Heart right ventricle (tissue), 16 donors: ENCODE measurements at regions of chr9 and their contacts with region 1.

Region 1: GRCh38 chr9:121538246-121538645 is 38.6 kb upstream of the GGTA1 start:
- DNase-seq: no peak
- ATAC-seq: peak in 7 of 8 donors; percentile 11 to 63 (median 47)
- H3K4me3 ChIP-seq: no peak overlapping the region
- H3K27ac ChIP-seq: peak overlapping the region in 1 of 10 donors; percentile 64
- H3K4me1 ChIP-seq: peaks cover 0 to 15% (median 9%) of the 10 kb centered on the region in 9 donors
- H3K27me3 ChIP-seq: no peaks in the 10 kb centered on the region
- CTCF ChIP-seq: peak in 7 of 9 donors; percentile 21 to 54 (median 37)

Region 2: GRCh38 chr9:121463026-121463807 is 75.0 kb before region 1 on chr9:
- intact Hi-C with region 1: loop called in 7 of 10 experiments (anchors 1 to 10 kb)
- DNase-seq: peak; percentile 72 to 73
- ATAC-seq: peak in 7 of 8 donors; percentile 54 to 85 (median 72)
- H3K4me3 ChIP-seq: no peak overlapping the region
- H3K27ac ChIP-seq: peak overlapping the region in 1 of 10 donors; percentile 41
- H3K4me1 ChIP-seq: peaks cover 0 to 31% (median 10%) of the 10 kb centered on the region in 9 donors
- H3K27me3 ChIP-seq: no peaks in the 10 kb centered on the region
- CTCF ChIP-seq: peak; percentile 74 to 89 (median 83)

Region 3: GRCh38 chr9:121498150-121498486 is 40.1 kb before region 1 on chr9:
- intact Hi-C with region 1: loop called in 3 of 10 experiments (anchors 5 kb)
- DNase-seq: peak in 1 of 2 donors; percentile 78
- ATAC-seq: peak; percentile 23 to 75 (median 64)
- H3K4me3 ChIP-seq: peak overlapping the region in 9 of 10 donors; percentile 51 to 82 (median 70)
- H3K27ac ChIP-seq: peak overlapping the region in 8 of 10 donors; percentile 86 to 95 (median 94)
- H3K4me1 ChIP-seq: peaks cover 5 to 67% (median 28%) of the 10 kb centered on the region in 9 donors
- H3K27me3 ChIP-seq: peaks cover 0 to 6% (median 0%) of the 10 kb centered on the region in 7 donors
- CTCF ChIP-seq: peak; percentile 36 to 82 (median 73)

Region 4: GRCh38 chr9:121581786-121582600 is 43.7 kb after region 1 on chr9:
- intact Hi-C with region 1: no loop called
- DNase-seq: peak in 1 of 2 donors; percentile 47
- ATAC-seq: peak in 3 of 8 donors; percentile 32 to 61 (median 34)
- H3K4me3 ChIP-seq: no peak overlapping the region
- H3K27ac ChIP-seq: peak overlapping the region in 1 of 10 donors; percentile 15
- H3K4me1 ChIP-seq: peaks cover 4 to 29% (median 9%) of the 10 kb centered on the region in 9 donors
- H3K27me3 ChIP-seq: no peaks in the 10 kb centered on the region
- CTCF ChIP-seq: no peak

Region 5: GRCh38 chr9:121640076-121640475 is 101.8 kb after region 1 on chr9:
- intact Hi-C with region 1: no loop called
- DNase-seq: peak; percentile 70 to 73
- ATAC-seq: peak; percentile 52 to 84 (median 74)
- H3K4me3 ChIP-seq: no peak overlapping the region
- H3K27ac ChIP-seq: peak overlapping the region in 9 of 10 donors; percentile 32 to 79 (median 47)
- H3K4me1 ChIP-seq: peaks cover 16 to 90% (median 61%) of the 10 kb centered on the region in 9 donors
- H3K27me3 ChIP-seq: no peaks in the 10 kb centered on the region
- CTCF ChIP-seq: peak; percentile 53 to 76 (median 68)